ENCODE measurements at regions of chr1 and their contacts with region 1.

Region 1: DNA sequence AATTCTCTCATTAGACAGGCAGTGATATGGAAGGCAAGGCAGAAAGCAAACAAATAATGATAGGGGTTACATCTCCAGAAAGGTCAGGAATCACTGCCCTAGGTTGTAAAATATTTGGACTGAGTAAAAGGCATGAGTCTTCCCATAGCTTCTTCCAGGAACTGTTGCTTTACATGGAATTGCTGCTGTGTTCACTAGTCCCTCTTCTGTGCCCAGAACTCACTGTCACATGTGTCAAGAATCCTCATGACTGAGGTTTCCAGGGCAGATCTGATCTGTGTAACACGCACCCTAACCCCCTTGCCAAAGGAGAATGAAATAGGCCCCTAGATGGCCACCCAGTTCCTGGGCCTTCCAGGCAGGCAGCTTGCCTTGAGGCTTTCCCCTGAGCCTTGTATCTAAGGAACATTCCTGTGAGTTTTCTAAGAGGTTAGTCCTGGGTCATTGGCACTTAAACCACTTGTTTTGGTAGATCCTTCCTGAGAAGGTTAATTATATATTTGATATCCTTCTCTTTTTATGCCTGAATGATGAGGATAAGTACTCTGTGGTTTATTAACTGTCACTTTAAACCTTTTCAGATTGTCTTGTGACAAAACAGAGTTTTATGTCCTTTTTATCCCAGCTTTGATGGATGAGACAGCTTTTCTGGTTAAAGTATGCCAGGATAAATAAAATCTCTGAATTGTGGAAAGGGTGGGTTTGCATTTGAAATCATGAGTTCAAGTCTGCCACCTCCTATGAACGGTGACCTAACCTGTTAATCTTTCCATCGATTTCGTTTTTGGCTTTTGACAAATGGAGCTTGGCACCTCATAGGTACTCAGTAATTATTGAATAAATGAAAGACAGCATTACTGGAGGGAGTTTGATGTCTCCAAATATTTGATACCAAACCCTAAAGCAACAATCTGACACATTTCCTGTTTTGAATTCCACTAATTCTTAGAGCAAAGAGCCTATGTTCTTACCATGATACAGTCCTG is 163.3 kb downstream of the DHRS3 start:
- DNase-seq: no peak
- ATAC-seq: peak; percentile 35

Region 2: DNA sequence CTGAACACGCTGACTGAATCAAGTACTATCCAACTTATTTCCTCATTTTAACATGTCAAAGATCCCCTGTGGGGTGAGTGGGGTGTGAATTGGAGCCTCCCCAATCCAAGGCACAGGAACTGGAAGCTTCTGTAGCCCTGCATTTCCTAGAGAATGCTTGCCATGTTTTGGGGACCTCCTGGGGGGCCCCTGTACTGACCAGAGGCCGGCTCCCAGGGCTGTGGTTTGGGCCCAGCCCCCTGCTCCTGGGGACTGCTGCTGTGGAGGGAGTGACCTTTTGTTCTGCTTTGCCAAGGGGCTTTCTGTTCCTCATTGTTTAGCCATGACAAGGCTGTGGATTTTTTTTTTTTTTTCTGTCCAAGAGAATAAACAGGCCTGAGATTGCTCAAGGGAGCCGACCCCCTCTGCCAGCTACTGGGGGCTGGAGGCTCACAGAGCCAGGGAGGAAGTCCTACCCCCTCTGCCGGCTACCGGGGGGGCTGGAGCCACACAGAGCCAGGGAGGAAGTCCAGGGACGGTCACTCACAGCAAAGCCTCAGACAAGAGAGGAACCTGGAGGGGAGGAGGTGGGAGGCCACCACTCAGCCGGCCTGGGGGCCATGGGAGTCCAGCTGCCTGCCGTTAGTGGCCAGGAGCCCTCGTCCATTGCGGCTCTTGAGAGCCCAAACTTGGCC is 270.6 kb before region 1 on chr1:
- intact Hi-C with region 1: no loop called
- DNase-seq: peak; percentile 92
- ATAC-seq: peak; percentile 85

Region 3: GRCh38 chr1:12407050-12407961 is 47.4 kb before region 1 on chr1:
- intact Hi-C with region 1: loop called (anchors 5 kb)
- DNase-seq: no peak
- ATAC-seq: peak; percentile 54

Region 4: DNA sequence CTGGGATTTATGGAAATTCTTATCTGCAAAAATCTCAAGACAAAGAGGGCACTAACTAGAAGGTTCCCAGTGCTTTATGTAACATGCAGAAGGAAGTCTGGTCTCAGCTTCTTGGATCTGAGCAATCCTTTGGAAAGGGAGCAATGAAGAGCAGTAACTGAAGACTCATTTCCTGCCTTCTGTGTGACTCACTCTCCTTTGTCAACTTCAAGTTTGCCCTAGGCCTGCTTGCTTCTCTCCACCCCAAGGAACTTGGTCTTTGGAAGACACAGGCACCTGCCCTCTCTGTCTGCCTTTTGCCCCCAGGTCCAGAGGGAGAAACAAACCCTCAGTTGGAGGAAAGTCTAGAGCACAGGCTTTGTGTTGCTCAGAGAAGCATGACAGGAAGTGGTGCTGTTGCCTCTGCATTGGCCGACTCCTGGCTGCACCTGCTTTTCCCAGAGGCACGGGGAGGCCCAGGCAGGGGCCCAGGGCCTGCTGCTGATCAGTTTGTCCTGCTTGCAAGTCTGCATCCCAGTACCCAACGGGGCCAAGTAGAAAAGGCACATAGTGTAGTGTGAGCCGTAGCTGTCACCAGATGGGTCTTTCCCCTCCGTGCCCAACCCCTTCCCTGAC is 26.2 kb after region 1 on chr1:
- intact Hi-C with region 1: no loop called
- DNase-seq: no peak
- ATAC-seq: no peak

Measured in Right ventricle myocardium inferior (tissue), 1 donor.